ENCODE measurements at regions of chr16 and their contacts with region 1.

Region 1: DNA sequence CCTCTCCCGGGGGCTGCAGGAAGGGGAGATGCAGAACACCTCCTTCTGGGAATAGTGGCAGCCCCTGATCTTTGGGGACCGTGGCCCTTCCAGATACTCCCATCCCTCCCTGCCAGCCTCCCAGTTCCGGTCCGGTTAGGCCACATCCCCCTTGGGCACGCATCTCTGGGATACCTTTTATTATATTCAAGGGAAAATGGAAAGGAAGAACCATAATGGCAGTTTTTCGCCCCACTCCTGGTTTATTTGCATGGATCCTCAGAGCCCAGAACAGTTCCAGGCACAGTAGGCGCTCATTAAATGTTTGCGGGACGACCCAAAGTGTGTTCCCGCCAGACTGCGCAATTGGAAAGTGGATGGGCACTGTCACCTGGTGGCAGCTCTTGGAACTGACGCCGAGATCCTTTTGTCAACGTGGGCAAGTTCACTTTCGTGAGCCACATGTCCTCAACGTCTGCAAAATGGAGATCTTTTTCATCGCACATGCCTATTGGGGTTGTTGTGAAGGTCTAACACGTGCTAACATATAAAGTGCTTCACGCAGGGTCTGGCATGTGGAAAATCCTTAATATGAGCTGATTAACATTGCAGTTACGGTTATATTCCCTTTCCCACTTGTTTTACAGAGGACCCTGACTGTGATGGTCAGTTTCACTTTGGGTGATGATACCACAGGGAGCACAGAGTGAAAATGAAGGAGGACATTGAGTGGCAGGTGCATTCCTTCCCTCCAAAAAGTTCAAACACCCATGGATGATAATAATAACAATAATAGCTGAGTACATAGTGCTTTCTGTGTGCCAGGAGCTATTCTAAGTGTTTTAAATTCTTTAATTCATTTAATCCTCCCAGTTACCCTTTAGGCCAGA is 1.7 kb upstream of the GPRC5B start:
- DNase-seq: peak; percentile 82

Region 2: DNA sequence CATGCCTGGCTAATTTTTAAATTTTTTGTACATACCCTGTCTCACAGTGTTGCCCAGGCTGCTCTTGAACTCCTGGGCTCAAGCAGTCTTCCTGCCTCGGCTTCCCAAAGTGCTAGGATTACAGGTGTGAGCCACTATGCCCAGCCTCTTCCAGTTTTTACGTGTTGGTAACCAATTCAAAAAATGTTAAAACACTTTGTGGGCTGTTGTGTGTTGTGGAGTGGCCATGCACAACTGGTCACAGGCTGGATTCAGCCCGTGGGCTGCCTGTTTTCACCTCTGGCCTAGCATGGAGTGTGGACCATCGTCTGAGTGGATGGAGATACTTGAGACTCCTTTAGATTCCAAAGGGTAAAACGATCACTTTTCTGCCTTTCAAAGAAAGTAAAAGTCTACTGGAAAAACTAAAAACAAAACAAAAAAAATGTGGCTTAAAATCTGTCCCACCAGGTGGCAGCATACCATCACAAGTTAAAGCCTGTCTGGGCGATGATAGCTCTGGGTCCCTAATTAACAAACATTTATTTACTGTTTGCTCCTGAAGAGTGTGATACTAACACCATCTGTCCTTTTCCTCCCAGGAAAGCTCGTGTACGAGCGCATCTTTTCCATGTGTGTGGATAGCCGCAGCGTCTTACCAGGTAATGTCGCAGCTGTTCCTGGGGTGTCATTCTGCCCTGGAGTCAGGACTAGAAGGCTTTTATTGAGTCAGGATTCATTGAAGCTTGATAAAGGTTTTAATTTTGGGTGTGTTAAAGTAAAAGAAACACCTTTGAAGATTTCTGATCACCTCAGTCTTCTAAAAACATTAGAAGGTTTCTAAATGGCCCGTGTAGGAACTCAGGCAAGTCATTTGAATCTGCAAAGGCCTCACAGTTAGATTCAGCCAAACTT is 285.0 kb before region 1 on chr16:
- in situ Hi-C with region 1: loop called (anchors 25 kb)
- DNase-seq: peak; percentile 57

Region 3: GRCh38 chr16:19935699-19936098 is 49.4 kb after region 1 on chr16:
- in situ Hi-C with region 1: no loop called
- DNase-seq: no peak

Measured in ACHN (cell line).